ENCODE measurements at regions of chr20 and their contacts with region 1.

Region 1: GRCh38 chr20:31514159-31515071 is at the start of gene HM13:
- DNase-seq: peak; percentile 88 to 93
- H3K4me3 ChIP-seq: peak within 1 kb of the TSS; percentile 96
- H3K4me1 ChIP-seq: peaks cover 25% of the 10 kb centered on the region
- H3K27me3 ChIP-seq: no peaks in the 10 kb centered on the region

Region 2: GRCh38 chr20:31560094-31560899 is 45.9 kb after region 1 on chr20:
- in situ Hi-C with region 1: loop called (anchors 5 kb)
- DNase-seq: peak; percentile 46 to 83
- H3K4me3 ChIP-seq: no peak overlapping the region
- H3K4me1 ChIP-seq: peaks cover 6% of the 10 kb centered on the region
- H3K27me3 ChIP-seq: no peaks in the 10 kb centered on the region

Region 3: DNA sequence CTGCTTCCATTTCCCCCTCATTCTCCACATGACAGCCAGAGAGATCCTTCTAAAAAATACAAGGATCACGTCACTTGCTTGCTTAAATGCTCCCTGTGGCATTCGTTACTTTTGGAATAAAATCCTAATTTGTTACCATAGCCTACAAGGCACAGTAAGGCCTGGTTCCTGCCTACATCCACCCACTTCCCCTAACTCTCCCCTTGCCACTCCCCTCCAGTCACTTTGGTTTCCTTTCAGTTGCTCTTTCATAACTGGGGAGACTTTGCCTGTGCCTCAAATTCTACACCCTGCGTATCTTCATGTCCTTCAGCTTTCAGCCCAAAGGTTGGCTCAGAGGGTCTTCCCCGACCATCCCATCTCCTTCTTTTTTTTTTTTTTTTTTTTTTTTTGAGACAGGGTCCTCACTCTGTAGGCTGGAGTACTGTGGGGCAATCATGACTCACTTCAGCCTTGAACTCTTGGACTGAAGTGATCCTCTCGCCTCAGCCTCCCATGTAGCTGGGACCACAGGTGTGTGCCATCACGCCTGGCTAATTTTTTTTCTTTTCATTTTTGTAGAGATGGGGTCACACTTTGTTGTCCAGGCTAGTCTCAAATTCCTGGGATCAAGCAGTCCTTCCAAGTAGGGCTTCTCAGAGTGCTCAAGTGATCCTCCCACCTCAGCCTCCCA is 103.2 kb after region 1 on chr20:
- in situ Hi-C with region 1: no loop called
- DNase-seq: no peak
- H3K4me3 ChIP-seq: no peak overlapping the region
- H3K4me1 ChIP-seq: peaks cover 7% of the 10 kb centered on the region
- H3K27me3 ChIP-seq: no peaks in the 10 kb centered on the region

Measured in HAP-1 (cell line).